ENCODE measurements at regions of chr12 and their contacts with region 1.

Region 1: DNA sequence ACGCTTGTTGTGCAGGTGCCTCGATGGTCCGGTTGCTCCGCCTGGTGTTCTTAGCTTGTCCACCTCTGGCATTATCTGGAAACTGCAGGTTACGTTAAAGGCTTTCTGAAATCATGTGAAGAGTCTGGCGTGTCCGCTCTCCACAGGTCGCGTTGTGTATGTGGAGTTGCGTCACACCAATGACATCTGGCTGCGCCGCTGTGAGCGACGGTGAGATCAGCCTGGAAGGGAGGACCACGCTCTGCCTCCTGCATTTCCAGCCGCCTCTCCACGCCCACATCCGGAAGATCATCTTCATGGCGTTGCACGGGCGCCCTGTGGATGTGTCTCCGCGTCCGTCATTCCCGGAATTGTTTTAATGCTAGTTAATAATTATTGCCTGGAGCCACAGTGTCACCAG is 50.6 kb upstream of the GALNT9 start:
- DNase-seq: no peak
- ATAC-seq: no peak
- H3K4me3 ChIP-seq: no peak overlapping the region
- H3K27ac ChIP-seq: no peak overlapping the region
- H3K4me1 ChIP-seq: no peaks in the 10 kb centered on the region
- H3K27me3 ChIP-seq: peaks cover 26% of the 10 kb centered on the region
- CTCF ChIP-seq: no peak

Region 2: GRCh38 chr12:132285991-132286681 is 93.9 kb before region 1 on chr12:
- CTCF ChIA-PET with region 1: no interaction called
- POLR2A ChIA-PET with region 1: no interaction called
- in situ Hi-C with region 1: no loop called
- intact Hi-C with region 1: loop called (anchors 10 kb)
- DNase-seq: no peak
- ATAC-seq: peak; percentile 29; the same call in 1 of the 2 replicates
- H3K4me3 ChIP-seq: no peak overlapping the region
- H3K27ac ChIP-seq: no peak overlapping the region
- H3K4me1 ChIP-seq: peaks cover 7% of the 10 kb centered on the region; the same call in 1 of the 2 replicates
- H3K27me3 ChIP-seq: no peaks in the 10 kb centered on the region
- CTCF ChIP-seq: no peak

Region 3: GRCh38 chr12:132506328-132507160 is 126.5 kb after region 1 on chr12:
- CTCF ChIA-PET with region 1: interaction called, 12 read pairs
- POLR2A ChIA-PET with region 1: no interaction called
- in situ Hi-C with region 1: no loop called
- intact Hi-C with region 1: no loop called
- DNase-seq: no peak
- ATAC-seq: peak; percentile 63
- H3K4me3 ChIP-seq: no peak overlapping the region
- H3K27ac ChIP-seq: peak overlapping the region; percentile 54
- H3K4me1 ChIP-seq: peaks cover 44% of the 10 kb centered on the region
- H3K27me3 ChIP-seq: no peaks in the 10 kb centered on the region
- CTCF ChIP-seq: no peak

Region 4: DNA sequence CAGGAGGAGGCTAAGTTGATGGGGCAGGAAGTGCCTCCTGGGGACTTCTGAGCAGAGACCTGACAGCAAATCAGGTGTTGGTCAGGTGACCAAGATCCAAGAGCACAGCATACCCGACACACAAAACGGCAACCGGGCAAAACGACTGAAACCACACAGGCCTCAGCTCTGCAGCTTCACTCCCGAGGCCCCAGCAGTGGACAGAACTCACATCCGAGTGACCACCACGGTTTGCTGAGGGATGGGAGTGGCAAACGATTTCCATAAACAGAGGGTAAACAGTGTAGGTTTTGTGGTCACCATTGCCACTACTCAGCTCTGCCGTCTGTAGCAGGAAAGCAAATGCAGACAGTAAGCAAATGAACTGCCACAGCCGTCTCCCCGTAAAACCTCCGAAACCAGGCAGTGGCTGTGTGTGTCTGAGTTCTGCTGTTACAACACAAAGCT is 493.0 kb after region 1 on chr12:
- CTCF ChIA-PET with region 1: no interaction called
- POLR2A ChIA-PET with region 1: no interaction called
- in situ Hi-C with region 1: no loop called
- intact Hi-C with region 1: no loop called
- DNase-seq: no peak
- ATAC-seq: 0 out of 2 replicates have a peak, but pooled peaks have one; percentile 10
- H3K4me3 ChIP-seq: no peak overlapping the region
- H3K27ac ChIP-seq: no peak overlapping the region
- H3K4me1 ChIP-seq: no peaks in the 10 kb centered on the region
- H3K27me3 ChIP-seq: no peaks in the 10 kb centered on the region
- CTCF ChIP-seq: no peak

Measured in Panc1 (cell line).